ENCODE measurements at regions of chr19 and their contacts with region 1.

Region 1: DNA sequence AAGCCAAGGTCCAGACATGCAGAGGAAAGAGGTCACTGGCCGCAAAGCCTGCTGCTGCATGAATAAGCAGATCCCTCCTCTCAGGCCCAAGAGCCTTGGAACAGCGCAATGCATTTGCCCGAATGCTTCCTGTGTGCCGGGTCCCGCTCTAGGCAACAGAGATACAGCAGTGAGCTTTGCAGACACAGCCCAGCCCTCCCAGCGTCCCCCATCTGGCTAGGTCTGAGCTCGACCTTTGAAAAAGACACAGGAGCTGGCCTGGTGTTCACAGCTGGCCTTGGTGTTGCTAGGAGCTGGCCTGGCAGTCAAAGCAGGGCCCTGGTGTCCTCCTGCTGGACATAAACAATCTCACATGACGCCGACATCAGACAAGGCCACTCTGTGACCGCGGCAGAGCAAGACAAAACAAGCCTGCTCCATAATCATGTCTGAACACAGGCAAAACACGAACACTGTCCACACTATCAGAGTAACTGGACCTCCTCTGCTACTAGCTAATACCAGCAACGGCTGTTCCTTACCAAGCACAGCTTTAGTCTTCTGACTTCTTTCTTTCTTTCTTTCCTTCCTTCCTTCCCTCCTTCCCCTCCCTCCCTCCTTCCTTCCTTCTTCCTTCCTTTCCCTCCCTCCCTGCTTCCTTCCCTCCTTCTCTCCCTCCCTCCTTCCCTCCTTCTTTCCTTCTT is 5.7 kb upstream of the PEX11G start:
- DNase-seq: peak; percentile 38 to 58
- ATAC-seq: peak; percentile 50 to 86 (median 72)
- H3K4me3 ChIP-seq: no peak overlapping the region
- H3K27ac ChIP-seq: peak overlapping the region; percentile 50 to 78 (median 69)
- H3K4me1 ChIP-seq: peaks cover 0 to 42% (median 11%) of the 10 kb centered on the region in 9 donors
- H3K27me3 ChIP-seq: peaks cover 0 to 3% (median 0%) of the 10 kb centered on the region in 7 donors
- CTCF ChIP-seq: peak in 4 of 9 donors; percentile 7 to 17 (median 10)

Region 2: GRCh38 chr19:7509619-7510018 is 15.1 kb after region 1 on chr19:
- intact Hi-C with region 1: loop called in 2 of 10 experiments (anchors 1 to 2 kb)
- DNase-seq: no peak
- ATAC-seq: no peak
- H3K4me3 ChIP-seq: no peak overlapping the region
- H3K27ac ChIP-seq: no peak overlapping the region
- H3K4me1 ChIP-seq: peaks cover 3 to 19% (median 8%) of the 10 kb centered on the region in 9 donors
- H3K27me3 ChIP-seq: peaks cover 0 to 15% (median 14%) of the 10 kb centered on the region in 7 donors
- CTCF ChIP-seq: no peak

Region 3: DNA sequence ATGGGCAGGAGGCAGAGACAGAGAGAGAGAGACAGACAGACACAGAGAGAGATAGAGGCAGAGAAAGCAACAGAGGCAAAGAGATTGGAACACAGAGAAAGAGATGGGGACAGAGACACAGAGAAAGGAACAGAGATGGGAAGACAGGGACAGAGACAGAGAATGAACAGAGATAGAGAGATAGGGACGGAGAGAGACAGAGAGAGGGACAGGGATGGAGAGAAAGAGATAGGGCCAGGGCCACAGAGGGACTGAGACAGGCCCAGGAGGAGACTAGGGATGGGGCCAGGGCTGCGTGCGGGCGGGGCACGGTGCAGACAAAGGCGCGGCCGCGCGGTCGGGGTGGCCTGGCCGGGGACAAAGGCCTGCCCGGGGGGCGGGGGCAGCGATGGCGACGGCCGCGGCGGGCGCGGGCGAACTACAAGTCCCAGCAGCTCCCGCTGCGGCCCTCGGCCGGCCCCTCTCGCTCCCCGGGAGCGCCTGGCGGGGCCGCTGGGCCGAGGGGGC is 21.1 kb after region 1 on chr19 and contains the start of gene ZNF358:
- intact Hi-C with region 1: loop called in 3 of 10 experiments (anchors 1 to 5 kb)
- DNase-seq: peak; percentile 70 to 87
- ATAC-seq: peak; percentile 79 to 95 (median 91)
- H3K4me3 ChIP-seq: peak within 1 kb of the TSS; percentile 63 to 90 (median 74)
- H3K27ac ChIP-seq: peak within 1 kb of the TSS; percentile 80 to 95 (median 90)
- H3K4me1 ChIP-seq: peaks cover 0 to 25% (median 10%) of the 10 kb centered on the region in 9 donors
- H3K27me3 ChIP-seq: peaks cover 0 to 19% (median 0%) of the 10 kb centered on the region in 7 donors
- CTCF ChIP-seq: no peak
- total RNA-seq, gene ZNF358: 67.7 to 104 (median 76.5) TPM

Region 4: DNA sequence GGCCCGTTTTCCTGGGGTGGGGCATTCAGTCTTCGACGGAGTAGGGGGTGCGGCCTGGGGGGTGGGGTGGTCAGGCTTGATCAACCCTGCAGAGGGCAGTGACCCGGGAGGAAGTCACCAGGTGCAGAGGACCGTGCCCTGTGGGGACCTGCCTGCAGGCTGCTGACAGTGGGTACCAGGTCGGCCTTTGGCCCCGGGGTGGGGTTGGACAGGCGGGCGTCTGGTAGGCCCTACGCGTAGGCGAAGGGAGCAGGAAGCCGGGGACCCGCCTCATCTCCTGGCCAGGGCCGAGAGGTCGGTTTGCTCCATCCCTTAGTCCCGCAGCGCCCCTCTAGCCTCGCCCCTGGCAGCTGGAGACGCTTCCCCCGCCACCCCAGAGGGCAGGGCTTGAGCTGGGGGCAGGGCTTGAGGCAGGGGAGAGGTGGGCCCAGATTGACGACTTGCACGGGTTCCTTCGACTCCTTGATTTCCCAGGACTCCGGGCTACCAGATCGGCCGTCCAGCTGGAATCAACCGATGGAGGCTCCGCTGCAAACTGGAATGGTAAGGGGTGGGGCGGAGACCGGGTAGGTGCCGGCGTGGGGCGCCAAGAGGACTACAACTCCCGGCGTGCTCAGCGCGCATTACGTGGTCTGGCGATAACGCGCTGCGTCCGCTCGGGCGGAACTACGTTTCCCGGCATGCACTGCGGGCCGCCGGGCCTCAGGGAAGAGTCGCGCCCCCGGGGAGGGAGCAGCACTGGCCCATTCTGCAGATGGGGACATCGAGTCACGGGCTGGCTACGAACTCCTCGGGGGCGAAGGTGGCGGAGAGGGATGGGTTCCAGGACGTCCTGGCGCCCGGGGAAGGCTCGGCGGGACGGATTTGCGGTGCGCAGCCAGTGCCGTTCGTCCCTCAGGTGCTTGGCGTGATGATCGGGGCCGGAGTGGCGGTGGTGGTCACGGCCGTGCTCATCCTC is 40.8 kb after region 1 on chr19 and contains the start of gene PNPLA6:
- intact Hi-C with region 1: no loop called
- DNase-seq: peak; percentile 96 to 98
- ATAC-seq: peak; percentile 83 to 92 (median 89)
- H3K4me3 ChIP-seq: peak within 1 kb of the TSS; percentile 74 to 98 (median 90)
- H3K27ac ChIP-seq: peak within 1 kb of the TSS; percentile 67 to 95 (median 91)
- H3K4me1 ChIP-seq: peaks cover 0 to 20% (median 14%) of the 10 kb centered on the region in 9 donors
- H3K27me3 ChIP-seq: no peaks in the 10 kb centered on the region
- CTCF ChIP-seq: no peak
- total RNA-seq, gene PNPLA6: 33.9 to 73.8 (median 41.6) TPM

Measured in heart right ventricle (tissue), 16 donors.